ENCODE measurements at regions of chr3 and their contacts with region 1.

Region 1: GRCh38 chr3:112676659-112677234 is 35.8 kb upstream of the CCDC80 start:
- DNase-seq: peak; percentile 87
- H3K4me3 Mint-ChIP-seq: peak overlapping the region; percentile 66
- H3K27ac Mint-ChIP-seq: peak overlapping the region; percentile 82
- H3K4me1 Mint-ChIP-seq: peaks cover 66% of the 10 kb centered on the region
- H3K27me3 Mint-ChIP-seq: peaks cover 9% of the 10 kb centered on the region

Region 2: DNA sequence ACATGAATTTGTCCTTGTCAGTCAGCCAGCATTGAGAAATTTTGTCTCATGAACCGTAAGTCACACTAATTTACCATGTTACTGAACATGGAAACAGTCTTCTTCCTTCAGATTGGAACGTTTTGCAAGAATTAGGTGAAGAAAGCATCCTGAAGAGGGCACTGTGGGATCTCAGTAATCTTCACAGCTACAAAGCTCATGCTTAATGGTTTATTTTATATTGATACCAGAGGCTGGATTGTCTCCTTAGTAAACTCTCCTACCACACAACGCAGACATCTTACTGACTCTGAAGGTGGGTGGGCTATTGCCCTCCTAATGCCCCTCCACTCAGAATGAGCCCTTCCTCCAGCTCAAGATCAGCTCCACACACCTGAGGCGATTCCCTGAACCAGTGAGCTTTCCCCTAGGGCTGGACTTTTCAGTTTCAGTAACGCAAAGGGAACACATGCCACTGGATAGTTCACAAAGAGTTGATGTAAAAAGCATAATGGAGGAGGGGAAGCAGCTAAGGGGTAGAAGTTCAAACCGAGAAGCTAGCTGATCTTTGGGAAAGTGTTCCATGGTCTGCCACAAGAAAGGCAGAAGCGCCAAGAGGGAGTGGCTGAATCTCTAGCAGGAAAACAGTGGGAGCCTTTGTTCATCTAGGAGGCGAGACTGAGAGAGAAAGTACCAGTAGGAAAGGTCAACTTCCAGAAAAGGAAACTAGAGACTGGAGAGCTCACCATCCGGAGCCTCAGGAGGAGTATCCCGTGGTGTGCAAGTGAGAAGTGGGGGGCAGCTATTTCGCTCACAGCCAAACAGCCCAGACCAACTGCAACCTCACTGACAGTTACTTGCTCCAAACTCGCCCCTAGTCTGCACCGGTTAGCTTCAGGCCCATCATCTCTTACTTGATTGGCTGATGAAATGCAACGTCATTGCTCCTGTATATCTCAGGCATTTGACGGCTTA is 383.1 kb before region 1 on chr3 and contains the start of gene SLC9C1:
- intact Hi-C with region 1: loop called (anchors 5 kb)
- DNase-seq: peak; percentile 28
- H3K4me3 Mint-ChIP-seq: peak within 1 kb of the TSS; percentile 70
- H3K27ac Mint-ChIP-seq: peak within 1 kb of the TSS; percentile 83
- H3K4me1 Mint-ChIP-seq: peaks cover 45% of the 10 kb centered on the region
- H3K27me3 Mint-ChIP-seq: no peaks in the 10 kb centered on the region
- total RNA-seq, gene SLC9C1: 0.37 TPM in 1 of 2 replicates, not detected in the other

Region 3: DNA sequence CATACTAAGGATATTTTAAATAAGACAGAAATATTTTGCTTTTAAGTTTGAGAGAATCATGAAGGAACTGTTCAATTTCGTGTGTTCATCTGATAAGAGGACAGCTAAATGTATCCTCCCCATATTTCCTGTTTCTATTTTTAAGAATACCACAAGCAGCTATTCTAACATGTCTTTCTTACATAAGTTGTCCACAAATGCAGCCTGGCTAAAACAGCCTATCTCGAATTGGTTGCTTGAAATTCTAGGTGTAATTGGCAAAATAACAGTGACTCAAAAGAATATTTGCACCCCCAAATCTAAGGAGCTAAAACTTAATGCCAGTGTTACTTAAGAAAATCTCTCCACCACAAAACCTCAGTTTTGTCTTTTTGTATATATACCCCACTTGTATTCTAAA is 212.5 kb before region 1 on chr3:
- intact Hi-C with region 1: loop called (anchors 5 kb)
- DNase-seq: no peak
- H3K4me3 Mint-ChIP-seq: peak overlapping the region; percentile 38
- H3K27ac Mint-ChIP-seq: no peak overlapping the region
- H3K4me1 Mint-ChIP-seq: peaks cover 65% of the 10 kb centered on the region
- H3K27me3 Mint-ChIP-seq: no peaks in the 10 kb centered on the region

Region 4: DNA sequence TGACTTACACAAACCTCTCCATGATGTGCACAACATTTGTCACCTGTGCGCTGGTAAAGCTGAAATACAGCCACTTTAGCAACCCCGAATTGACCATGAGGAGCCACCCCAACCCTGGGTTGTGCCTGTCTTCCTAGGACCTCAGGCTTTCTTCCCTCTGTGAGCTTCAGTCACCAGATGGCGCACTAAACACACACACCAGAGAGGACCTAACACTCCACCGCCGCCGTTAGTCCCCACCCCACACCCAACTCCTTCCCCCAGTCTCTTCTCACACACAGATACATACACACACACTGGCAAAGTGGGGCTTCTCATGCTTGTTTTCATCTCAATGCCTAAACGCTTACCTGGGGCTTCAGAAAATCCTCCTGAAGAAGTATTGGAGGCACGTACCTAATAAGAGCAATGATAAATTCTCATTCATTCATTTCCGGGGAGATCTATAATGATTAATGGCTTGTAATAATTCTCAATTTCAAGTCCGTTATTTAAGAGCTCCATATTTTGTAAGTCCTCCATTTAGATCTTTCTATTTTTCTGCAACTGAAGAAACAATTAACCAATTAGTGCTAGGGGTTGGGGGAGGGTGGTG is 33.7 kb before region 1 on chr3:
- intact Hi-C with region 1: loop called (anchors 2 kb)
- DNase-seq: peak; percentile 75
- H3K4me3 Mint-ChIP-seq: peak overlapping the region; percentile 65
- H3K27ac Mint-ChIP-seq: no peak overlapping the region
- H3K4me1 Mint-ChIP-seq: peaks cover 23% of the 10 kb centered on the region
- H3K27me3 Mint-ChIP-seq: peaks cover 10% of the 10 kb centered on the region

Region 5: DNA sequence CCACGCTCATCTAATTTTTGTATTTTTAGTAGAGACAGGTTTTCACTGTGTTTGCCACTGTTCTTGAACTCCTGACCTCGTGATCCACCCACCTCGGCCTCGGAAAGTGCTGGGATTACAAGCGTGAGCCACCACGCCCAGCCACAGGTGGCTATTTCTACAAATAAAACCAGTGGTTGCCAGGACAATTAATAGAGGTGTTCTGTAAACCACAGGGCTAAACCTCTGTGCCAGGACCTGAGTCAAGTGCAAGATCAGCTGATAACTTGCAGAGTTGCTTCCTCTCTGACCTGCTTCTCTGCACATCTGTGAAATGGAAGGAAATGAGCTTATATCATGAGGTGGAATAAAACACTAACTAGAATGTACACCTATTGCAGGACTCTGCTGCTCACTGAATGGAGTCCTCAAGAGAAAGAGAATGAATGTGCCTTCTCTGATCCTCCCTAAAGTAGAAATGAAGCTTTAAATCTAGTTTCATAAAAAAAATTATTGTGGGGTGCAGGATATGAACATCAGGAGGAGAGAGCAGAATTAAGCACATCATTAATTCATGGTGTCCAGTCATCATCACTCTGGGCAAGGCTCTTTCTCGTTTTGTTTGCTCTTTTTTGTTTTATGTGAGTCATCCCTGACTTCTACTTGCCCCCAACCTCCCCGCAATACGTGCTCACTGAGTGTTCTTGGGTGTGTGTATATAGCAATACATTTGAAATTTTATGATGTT is 97.3 kb after region 1 on chr3:
- intact Hi-C with region 1: loop called (anchors 10 kb)
- DNase-seq: peak; percentile 13
- H3K4me3 Mint-ChIP-seq: no peak overlapping the region
- H3K27ac Mint-ChIP-seq: no peak overlapping the region
- H3K4me1 Mint-ChIP-seq: peaks cover 37% of the 10 kb centered on the region
- H3K27me3 Mint-ChIP-seq: peaks cover 2% of the 10 kb centered on the region

Region 6: DNA sequence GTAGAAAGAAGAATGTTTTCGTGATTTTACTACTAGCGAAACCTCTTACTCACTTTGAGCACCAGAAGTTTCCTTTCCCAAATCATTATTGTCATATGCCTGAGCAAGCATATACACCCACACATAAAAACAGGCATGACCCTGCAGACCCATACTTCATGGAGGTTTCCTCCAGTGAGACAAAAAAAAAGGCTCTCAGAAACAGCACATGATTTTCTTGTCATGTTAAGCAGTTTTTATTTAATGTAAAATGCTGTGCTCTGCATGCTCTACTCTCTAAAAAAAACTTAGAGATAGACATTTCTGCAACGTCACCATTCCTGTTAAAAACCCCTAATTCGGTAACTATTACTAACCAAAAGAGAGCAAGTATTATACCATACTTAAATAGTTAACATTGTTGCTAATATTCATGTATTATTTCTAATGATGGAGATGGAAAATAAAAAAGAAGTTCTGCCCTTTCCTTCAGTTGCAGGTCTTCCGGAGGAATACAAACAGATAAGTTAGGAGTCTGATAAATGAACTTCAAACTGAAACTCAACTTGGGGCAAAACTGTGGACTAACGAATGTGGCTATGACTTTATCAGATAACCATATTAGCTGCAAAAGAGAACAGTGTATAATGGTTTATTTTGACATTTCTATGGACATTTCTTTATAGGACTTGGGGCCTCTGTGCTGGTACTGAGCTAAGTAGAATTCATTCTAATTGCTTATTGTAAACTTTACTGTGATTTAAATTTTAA is 282.2 kb after region 1 on chr3:
- intact Hi-C with region 1: loop called (anchors 5 kb)
- DNase-seq: no peak
- H3K4me3 Mint-ChIP-seq: peak overlapping the region; percentile 73
- H3K27ac Mint-ChIP-seq: peak overlapping the region; percentile 72
- H3K4me1 Mint-ChIP-seq: peaks cover 22% of the 10 kb centered on the region
- H3K27me3 Mint-ChIP-seq: no peaks in the 10 kb centered on the region

Region 7: DNA sequence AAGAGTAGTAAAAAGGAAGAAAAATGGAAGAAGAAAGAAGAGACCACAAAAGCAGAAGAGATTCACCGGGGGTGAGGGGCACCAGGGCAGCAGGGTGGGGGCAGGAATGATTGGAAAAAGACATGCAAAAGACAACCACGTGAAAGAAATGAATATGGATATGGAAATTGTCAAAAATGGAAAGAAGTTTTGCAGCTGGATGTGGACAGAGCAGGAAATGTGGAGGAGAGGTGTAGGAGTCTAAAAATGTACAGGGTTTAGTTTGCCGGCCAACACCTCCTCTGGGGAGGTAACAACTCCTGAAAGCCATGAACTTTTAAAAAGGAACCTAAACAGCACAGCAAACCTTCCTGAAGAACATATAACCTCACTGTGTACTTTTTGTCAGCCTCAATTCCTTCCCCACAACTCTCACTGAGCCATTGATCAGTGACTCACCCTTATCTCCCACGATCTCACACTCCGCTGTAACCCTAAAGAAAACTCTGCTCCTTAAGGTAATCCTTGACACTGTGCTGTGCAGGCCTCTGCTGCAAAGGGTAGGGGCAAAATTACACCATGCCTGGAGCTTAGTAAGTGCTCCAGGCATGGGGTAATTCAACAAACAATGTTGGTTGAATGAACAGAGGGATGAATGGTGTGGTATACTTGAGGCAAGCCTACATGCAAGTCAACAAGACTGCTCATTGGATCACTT is 434.4 kb after region 1 on chr3:
- intact Hi-C with region 1: loop called (anchors 1 kb)
- DNase-seq: peak; percentile 19
- H3K4me3 Mint-ChIP-seq: no peak overlapping the region
- H3K27ac Mint-ChIP-seq: peak overlapping the region; percentile 64
- H3K4me1 Mint-ChIP-seq: peaks cover 58% of the 10 kb centered on the region
- H3K27me3 Mint-ChIP-seq: no peaks in the 10 kb centered on the region